ENCODE measurements at regions of chr11 and their contacts with region 1.

Region 1: DNA sequence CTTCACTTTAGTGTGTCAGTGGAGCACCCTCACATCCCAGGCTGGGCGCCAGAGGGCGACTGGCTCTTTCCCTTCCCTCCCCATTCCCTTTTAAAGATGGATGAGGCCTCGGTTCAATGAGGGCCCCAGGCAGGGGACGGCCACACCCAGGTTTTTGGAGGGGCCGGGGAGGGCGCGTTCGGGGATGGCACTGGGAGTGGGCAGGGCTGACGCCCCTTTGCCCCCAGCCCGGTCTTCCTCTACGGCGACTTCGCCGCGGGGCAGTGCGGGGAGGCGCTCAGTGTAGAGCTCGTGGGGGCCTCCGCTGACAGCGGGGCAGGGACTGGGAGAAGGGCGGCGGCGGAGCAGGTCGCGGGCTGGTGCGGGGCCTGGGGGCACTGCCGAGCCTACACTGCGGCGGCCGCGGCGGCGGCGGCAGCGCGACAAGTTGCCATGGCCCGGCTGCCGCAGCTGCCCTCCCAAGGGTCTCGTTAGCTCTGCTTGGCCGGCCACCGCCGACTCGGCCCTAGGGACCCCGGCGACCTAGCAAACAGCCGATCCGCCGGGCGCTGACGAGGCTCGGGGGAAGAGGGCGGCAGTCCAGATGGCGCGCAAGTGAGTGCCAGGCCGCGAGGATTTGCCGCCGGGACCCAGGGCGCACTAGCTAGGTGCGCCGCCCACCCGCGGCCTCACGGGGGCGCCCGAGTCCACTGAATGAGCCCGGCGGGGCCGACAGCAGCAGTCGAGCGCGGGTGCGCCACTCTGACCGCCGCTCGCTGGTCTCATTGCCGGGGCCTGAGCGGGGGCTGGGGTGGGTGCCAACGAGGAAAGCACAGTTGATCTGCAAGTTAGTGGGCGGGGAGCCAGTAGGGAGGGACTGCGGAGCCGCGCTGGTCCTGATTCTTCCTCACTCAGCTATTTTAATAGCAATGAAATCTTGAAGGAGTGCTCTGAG is 92.7 kb downstream of the RRM1 start:
- DNase-seq: peak; percentile 61 to 89 (median 80)
- ATAC-seq: peak; percentile 90
- H3K4me3 ChIP-seq: peak overlapping the region; percentile 51
- H3K4me3 Mint-ChIP-seq: peak overlapping the region; percentile 80
- H3K27ac ChIP-seq: no peak overlapping the region
- H3K27ac Mint-ChIP-seq: no peak overlapping the region
- H3K4me1 ChIP-seq: peaks cover 9% of the 10 kb centered on the region
- H3K4me1 Mint-ChIP-seq: no peaks in the 10 kb centered on the region
- H3K27me3 ChIP-seq: no peaks in the 10 kb centered on the region
- H3K27me3 Mint-ChIP-seq: no peaks in the 10 kb centered on the region
- CTCF ChIP-seq: peak; percentile 89

Region 2: GRCh38 chr11:4125141-4125540 is 62.2 kb before region 1 on chr11:
- CTCF ChIA-PET with region 1: no interaction called
- POLR2A ChIA-PET with region 1: no interaction called
- intact Hi-C with region 1: no loop called
- DNase-seq: no peak
- ATAC-seq: no peak
- H3K4me3 ChIP-seq: no peak overlapping the region
- H3K4me3 Mint-ChIP-seq: no peak overlapping the region
- H3K27ac ChIP-seq: no peak overlapping the region
- H3K27ac Mint-ChIP-seq: peak overlapping the region; percentile 18
- H3K4me1 ChIP-seq: no peaks in the 10 kb centered on the region
- H3K4me1 Mint-ChIP-seq: no peaks in the 10 kb centered on the region
- H3K27me3 ChIP-seq: no peaks in the 10 kb centered on the region
- H3K27me3 Mint-ChIP-seq: no peaks in the 10 kb centered on the region
- CTCF ChIP-seq: no peak

Region 3: GRCh38 chr11:4493480-4493818 is 306.1 kb after region 1 on chr11:
- CTCF ChIA-PET with region 1: interaction called, 36 read pairs
- POLR2A ChIA-PET with region 1: no interaction called
- intact Hi-C with region 1: loop called (anchors 1 kb)
- DNase-seq: no peak
- ATAC-seq: no peak
- H3K4me3 ChIP-seq: no peak overlapping the region
- H3K4me3 Mint-ChIP-seq: no peak overlapping the region
- H3K27ac ChIP-seq: no peak overlapping the region
- H3K27ac Mint-ChIP-seq: no peak overlapping the region
- H3K4me1 ChIP-seq: no peaks in the 10 kb centered on the region
- H3K4me1 Mint-ChIP-seq: no peaks in the 10 kb centered on the region
- H3K27me3 ChIP-seq: peaks cover 0 to 3% of the 10 kb centered on the region in 2 experiments
- H3K27me3 Mint-ChIP-seq: peaks cover 42% of the 10 kb centered on the region
- CTCF ChIP-seq: peak; percentile 36

Region 4: GRCh38 chr11:4636962-4637661 is 449.8 kb after region 1 on chr11 and contains the start of gene OR51D1:
- CTCF ChIA-PET with region 1: interaction called, 6 read pairs
- POLR2A ChIA-PET with region 1: no interaction called
- intact Hi-C with region 1: loop called in 1 of 2 experiments (anchors 5 kb)
- DNase-seq: peak; percentile 47 to 80 (median 57)
- ATAC-seq: peak; percentile 86
- H3K4me3 ChIP-seq: no peak within 1 kb of the TSS
- H3K4me3 Mint-ChIP-seq: no peak within 1 kb of the TSS
- H3K27ac ChIP-seq: no peak within 1 kb of the TSS
- H3K27ac Mint-ChIP-seq: no peak within 1 kb of the TSS
- H3K4me1 ChIP-seq: peaks cover 7% of the 10 kb centered on the region
- H3K4me1 Mint-ChIP-seq: no peaks in the 10 kb centered on the region
- H3K27me3 ChIP-seq: peaks cover 4 to 7% of the 10 kb centered on the region in 2 experiments
- H3K27me3 Mint-ChIP-seq: peaks cover 24% of the 10 kb centered on the region
- CTCF ChIP-seq: peak; percentile 87
- total RNA-seq, gene OR51D1: not detected

Region 5: GRCh38 chr11:5380740-5381342 is 1193.5 kb after region 1 on chr11:
- CTCF ChIA-PET with region 1: interaction called, 3 read pairs
- POLR2A ChIA-PET with region 1: no interaction called
- intact Hi-C with region 1: loop called in 1 of 2 experiments (anchors 10 kb)
- DNase-seq: peak in 4 of 14 experiments; percentile 0 to 21 (median 10)
- ATAC-seq: no peak
- H3K4me3 ChIP-seq: no peak overlapping the region
- H3K4me3 Mint-ChIP-seq: no peak overlapping the region
- H3K27ac ChIP-seq: no peak overlapping the region
- H3K27ac Mint-ChIP-seq: no peak overlapping the region
- H3K4me1 ChIP-seq: no peaks in the 10 kb centered on the region
- H3K4me1 Mint-ChIP-seq: no peaks in the 10 kb centered on the region
- H3K27me3 ChIP-seq: no peaks in the 10 kb centered on the region
- H3K27me3 Mint-ChIP-seq: no peaks in the 10 kb centered on the region
- CTCF ChIP-seq: peak; percentile 20

Region 6: DNA sequence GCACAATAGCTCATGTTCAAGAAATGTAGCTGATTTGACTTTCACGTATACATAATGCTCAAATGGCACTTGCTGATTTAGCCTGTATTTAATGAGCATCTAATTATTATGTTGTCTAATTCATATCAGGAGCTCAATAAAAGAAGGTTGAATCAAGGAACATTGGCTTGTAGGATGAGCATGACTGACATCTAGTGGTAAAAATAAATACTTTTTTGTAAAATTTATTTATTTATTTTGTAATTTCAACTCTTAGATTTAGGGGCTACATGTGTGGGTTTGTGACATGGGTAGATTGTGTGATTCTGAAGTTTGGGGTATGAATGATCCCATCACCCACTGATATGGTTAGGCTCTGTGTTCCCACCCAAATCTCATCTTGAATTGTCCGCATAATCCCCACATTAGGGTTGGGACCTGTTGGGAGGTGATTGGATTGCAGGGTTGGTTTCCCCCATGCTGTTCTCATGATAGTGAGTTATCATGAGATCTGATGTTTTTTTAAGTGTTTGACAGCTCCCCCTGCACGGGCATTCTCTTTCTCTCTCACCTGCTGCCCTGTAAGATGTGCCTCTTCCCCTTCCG is 1704.0 kb after region 1 on chr11:
- CTCF ChIA-PET with region 1: interaction called, 3 read pairs
- POLR2A ChIA-PET with region 1: no interaction called
- intact Hi-C with region 1: loop called in 1 of 2 experiments (anchors 10 kb)
- DNase-seq: peak in 2 of 14 experiments; percentile 5 to 15
- ATAC-seq: no peak
- H3K4me3 ChIP-seq: no peak overlapping the region
- H3K4me3 Mint-ChIP-seq: no peak overlapping the region
- H3K27ac ChIP-seq: no peak overlapping the region
- H3K27ac Mint-ChIP-seq: no peak overlapping the region
- H3K4me1 ChIP-seq: no peaks in the 10 kb centered on the region
- H3K4me1 Mint-ChIP-seq: no peaks in the 10 kb centered on the region
- H3K27me3 ChIP-seq: peaks cover 0 to 4% of the 10 kb centered on the region in 2 experiments
- H3K27me3 Mint-ChIP-seq: peaks cover 22% of the 10 kb centered on the region
- CTCF ChIP-seq: peak; percentile 48